HAP-1 (cell line): ENCODE measurements at regions of chr9 and their contacts with region 1.

Region 1: GRCh38 chr9:87950765-87951488 is 23.4 kb downstream of the CDK20 start:
- DNase-seq: peak in 1 of 2 experiments; percentile 17
- H3K4me3 ChIP-seq: no peak overlapping the region
- H3K4me1 ChIP-seq: no peaks in the 10 kb centered on the region
- H3K27me3 ChIP-seq: no peaks in the 10 kb centered on the region

Region 2: DNA sequence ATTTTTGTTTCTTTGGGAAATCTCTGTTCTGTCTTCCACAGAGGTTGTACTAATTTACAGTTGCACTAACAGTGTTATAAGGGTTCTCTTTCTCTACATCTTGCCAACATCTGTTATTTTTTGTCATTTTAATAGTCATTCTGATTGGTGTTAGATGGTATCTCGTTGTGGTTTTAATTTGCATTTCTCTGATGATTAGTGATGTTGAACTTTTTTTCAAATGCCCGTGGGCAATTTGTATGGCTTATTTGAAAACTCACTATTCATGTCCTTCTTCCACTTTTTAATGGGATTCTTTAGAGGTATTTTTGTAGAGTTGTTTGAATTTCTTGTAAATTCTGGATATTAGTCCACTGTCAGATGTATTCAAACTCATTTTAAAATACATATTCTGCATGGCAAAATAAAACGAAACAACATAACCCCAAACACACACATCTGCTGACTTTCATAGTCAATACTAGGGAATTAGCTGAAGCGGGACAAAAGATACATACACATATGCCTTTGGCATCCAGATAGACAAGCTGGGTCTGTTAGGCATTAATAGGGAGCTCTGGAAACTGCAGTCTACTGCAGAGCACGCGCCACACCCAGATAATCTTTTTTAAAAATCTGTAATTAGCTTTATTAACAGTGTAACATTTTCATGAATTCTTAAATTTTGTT is 193.2 kb after region 1 on chr9:
- in situ Hi-C with region 1: no loop called
- DNase-seq: no peak
- H3K4me3 ChIP-seq: no peak overlapping the region
- H3K4me1 ChIP-seq: no peaks in the 10 kb centered on the region
- H3K27me3 ChIP-seq: no peaks in the 10 kb centered on the region

Region 3: GRCh38 chr9:88433583-88434255 is 482.8 kb after region 1 on chr9:
- in situ Hi-C with region 1: no loop called
- DNase-seq: no peak
- H3K4me3 ChIP-seq: no peak overlapping the region
- H3K4me1 ChIP-seq: no peaks in the 10 kb centered on the region
- H3K27me3 ChIP-seq: no peaks in the 10 kb centered on the region

Region 4: GRCh38 chr9:88578121-88579054 is 627.5 kb after region 1 on chr9:
- in situ Hi-C with region 1: loop called (anchors 25 kb)
- DNase-seq: peak; percentile 41 to 86
- H3K4me3 ChIP-seq: no peak overlapping the region
- H3K4me1 ChIP-seq: no peaks in the 10 kb centered on the region
- H3K27me3 ChIP-seq: no peaks in the 10 kb centered on the region

Region 5: GRCh38 chr9:89000973-89001916 is 1050.3 kb after region 1 on chr9:
- in situ Hi-C with region 1: loop called (anchors 5 kb)
- DNase-seq: peak; percentile 68 to 91
- H3K4me3 ChIP-seq: no peak overlapping the region
- H3K4me1 ChIP-seq: no peaks in the 10 kb centered on the region
- H3K27me3 ChIP-seq: peaks cover 7% of the 10 kb centered on the region; the same call in 1 of the 2 replicates